Activated T-helper 2 cell treated with anti-CD3 and anti-CD28 coated beads, Interferon-gamma antibody, Interleukin-2, Interleukin-4, amounts not matched to agents 10 μg/mL and 5 μg/mL and 100 μg/mL, durations not matched to agents 14 hours and 24 hours and 36 hours (primary cell): ENCODE measurements at regions of chr5 and their contacts with region 1.

Region 1: GRCh38 chr5:171387345-171387969 is at the start of gene NPM1:
- DNase-seq: peak; percentile 97
- H3K4me3 Mint-ChIP-seq: peak within 1 kb of the TSS; percentile 94
- H3K27ac Mint-ChIP-seq: peak within 1 kb of the TSS; percentile 97
- H3K4me1 Mint-ChIP-seq: peaks cover 31% of the 10 kb centered on the region
- H3K27me3 Mint-ChIP-seq: peaks cover 3% of the 10 kb centered on the region
- total RNA-seq, gene NPM1: 2,774 and 3,051 TPM in 2 replicates

Region 2: GRCh38 chr5:170278611-170279452 is 1108.6 kb before region 1 on chr5:
- intact Hi-C with region 1: loop called (anchors 10 kb)
- DNase-seq: peak; percentile 90
- H3K4me3 Mint-ChIP-seq: peak overlapping the region; percentile 63
- H3K27ac Mint-ChIP-seq: peak overlapping the region; percentile 98
- H3K4me1 Mint-ChIP-seq: peaks cover 86% of the 10 kb centered on the region
- H3K27me3 Mint-ChIP-seq: no peaks in the 10 kb centered on the region

Region 3: GRCh38 chr5:171405601-171406005 is 18.1 kb after region 1 on chr5:
- intact Hi-C with region 1: loop called (anchors 2 kb)
- DNase-seq: no peak
- H3K4me3 Mint-ChIP-seq: no peak overlapping the region
- H3K27ac Mint-ChIP-seq: peak overlapping the region; percentile 12
- H3K4me1 Mint-ChIP-seq: peaks cover 34% of the 10 kb centered on the region
- H3K27me3 Mint-ChIP-seq: no peaks in the 10 kb centered on the region

Region 4: DNA sequence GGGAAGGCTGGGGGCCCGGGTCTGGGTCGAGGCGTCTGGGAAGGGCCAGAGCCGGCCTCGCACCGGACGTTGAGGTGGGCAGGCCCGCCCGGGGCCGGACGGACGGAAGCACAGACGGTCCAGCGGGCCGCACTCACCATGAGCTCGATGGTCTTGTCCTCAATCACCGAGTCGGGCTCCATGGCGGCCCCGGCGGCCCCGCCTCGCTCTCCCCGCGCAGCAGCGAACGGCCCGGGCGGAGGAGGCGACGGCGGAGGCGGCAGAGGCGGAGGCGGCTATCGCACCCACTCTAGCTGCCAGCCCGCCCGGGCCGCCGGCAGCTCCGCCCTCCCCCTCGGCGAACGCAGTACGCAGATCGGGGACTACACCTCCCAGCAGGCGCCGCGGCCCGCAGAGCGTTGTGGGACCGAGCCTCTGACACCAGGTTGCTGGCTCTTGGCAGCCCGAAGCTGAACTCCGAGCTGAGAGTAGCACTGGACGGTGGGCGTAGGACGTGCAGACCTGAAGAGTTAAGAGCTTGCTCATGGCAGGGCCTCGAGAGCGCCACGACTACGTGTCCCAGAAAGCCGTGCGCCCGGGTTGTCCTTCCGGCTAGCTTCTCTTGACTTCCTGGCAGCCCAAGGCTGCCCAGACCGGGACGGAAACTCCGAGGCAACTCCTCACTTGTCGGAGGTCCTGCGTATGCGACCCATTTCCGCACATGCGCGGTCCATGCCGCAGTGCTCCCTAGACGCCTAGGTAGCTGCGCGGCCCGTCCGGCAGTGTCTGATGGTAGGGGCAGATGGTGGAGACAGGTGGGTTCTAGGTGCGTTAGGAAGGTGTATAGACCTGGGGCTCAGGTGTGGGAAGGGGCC is 619.1 kb after region 1 on chr5 and contains the start of gene FBXW11:
- intact Hi-C with region 1: loop called (anchors 2 kb)
- DNase-seq: peak; percentile 92
- H3K4me3 Mint-ChIP-seq: peak within 1 kb of the TSS; percentile 94
- H3K27ac Mint-ChIP-seq: peak within 1 kb of the TSS; percentile 96
- H3K4me1 Mint-ChIP-seq: peaks cover 56% of the 10 kb centered on the region
- H3K27me3 Mint-ChIP-seq: no peaks in the 10 kb centered on the region
- total RNA-seq, gene FBXW11: 47.3 and 51.4 TPM in 2 replicates

Region 5: DNA sequence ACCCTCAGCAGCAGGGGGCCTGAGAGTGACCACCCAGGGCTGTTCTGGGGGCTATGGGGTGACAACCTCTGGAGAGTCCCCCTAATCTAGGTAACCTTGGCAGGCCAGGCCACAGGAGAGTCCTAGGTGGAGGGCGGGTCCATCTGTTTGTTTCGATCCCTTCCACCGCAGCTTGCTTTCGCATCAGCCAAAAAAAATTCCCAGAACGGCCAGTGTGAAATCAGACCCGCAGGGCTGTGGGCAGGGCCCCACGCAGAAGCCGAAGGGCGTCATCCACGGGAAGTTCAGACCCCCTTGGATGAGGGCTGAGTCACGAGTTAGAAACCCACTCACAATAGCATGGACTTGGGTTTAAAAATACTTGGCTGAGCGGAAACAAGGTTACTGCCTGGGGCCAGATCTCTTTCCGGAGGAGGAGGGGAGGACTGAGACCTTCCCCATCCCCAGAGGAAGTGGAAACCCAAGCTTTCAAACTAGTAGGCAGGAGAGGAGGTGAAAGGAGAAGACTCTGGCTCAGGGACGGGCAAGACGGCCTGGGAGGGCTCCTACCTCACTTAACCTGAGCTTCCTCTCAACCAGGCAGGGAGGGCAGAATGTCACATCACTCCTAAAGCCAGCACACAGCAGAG is 792.0 kb after region 1 on chr5:
- intact Hi-C with region 1: loop called (anchors 5 kb)
- DNase-seq: peak; percentile 44
- H3K4me3 Mint-ChIP-seq: peak overlapping the region; percentile 76
- H3K27ac Mint-ChIP-seq: peak overlapping the region; percentile 92
- H3K4me1 Mint-ChIP-seq: peaks cover 73% of the 10 kb centered on the region
- H3K27me3 Mint-ChIP-seq: no peaks in the 10 kb centered on the region

Region 6: GRCh38 chr5:172283020-172283861 is 895.8 kb after region 1 on chr5 and contains the start of gene UBTD2:
- intact Hi-C with region 1: loop called (anchors 5 kb)
- DNase-seq: peak; percentile 79
- H3K4me3 Mint-ChIP-seq: peak within 1 kb of the TSS; percentile 89
- H3K27ac Mint-ChIP-seq: peak within 1 kb of the TSS; percentile 75
- H3K4me1 Mint-ChIP-seq: peaks cover 24% of the 10 kb centered on the region
- H3K27me3 Mint-ChIP-seq: peaks cover 25% of the 10 kb centered on the region
- total RNA-seq, gene UBTD2: 6.6 TPM in 2 replicates

Region 7: GRCh38 chr5:173144200-173145176 is 1757.0 kb after region 1 on chr5 and contains the start of gene BNIP1:
- intact Hi-C with region 1: loop called (anchors 5 kb)
- DNase-seq: peak; percentile 91
- H3K4me3 Mint-ChIP-seq: peak within 1 kb of the TSS; percentile 95
- H3K27ac Mint-ChIP-seq: peak within 1 kb of the TSS; percentile 98
- H3K4me1 Mint-ChIP-seq: peaks cover 5% of the 10 kb centered on the region
- H3K27me3 Mint-ChIP-seq: no peaks in the 10 kb centered on the region
- total RNA-seq, gene BNIP1: 22.6 and 23.2 TPM in 2 replicates